PC-3 (cell line): ENCODE measurements at regions of chr17 and their contacts with region 1.

Region 1: GRCh38 chr17:68205251-68205807 is 42.5 kb upstream of the AMZ2 start:
- DNase-seq: peak; percentile 91
- ATAC-seq: peak; percentile 83
- H3K4me3 ChIP-seq: peak overlapping the region; percentile 94
- H3K27ac ChIP-seq: no peak overlapping the region
- H3K4me1 ChIP-seq: peaks cover 14% of the 10 kb centered on the region
- H3K27me3 ChIP-seq: peaks cover 2% of the 10 kb centered on the region
- CTCF ChIP-seq: peak; percentile 91

Region 2: GRCh38 chr17:68011199-68011665 is 194.1 kb before region 1 on chr17:
- CTCF ChIA-PET with region 1: no interaction called
- POLR2A ChIA-PET with region 1: no interaction called
- intact Hi-C with region 1: no loop called
- DNase-seq: peak; percentile 59
- ATAC-seq: peak; percentile 90
- H3K4me3 ChIP-seq: peak overlapping the region; percentile 48; the same call in 1 of the 2 replicates
- H3K27ac ChIP-seq: no peak overlapping the region
- H3K4me1 ChIP-seq: 0 out of 2 replicates have a peak, but pooled peaks cover 3% of the 10 kb centered on the region
- H3K27me3 ChIP-seq: no peaks in the 10 kb centered on the region
- CTCF ChIP-seq: peak; percentile 91

Region 3: DNA sequence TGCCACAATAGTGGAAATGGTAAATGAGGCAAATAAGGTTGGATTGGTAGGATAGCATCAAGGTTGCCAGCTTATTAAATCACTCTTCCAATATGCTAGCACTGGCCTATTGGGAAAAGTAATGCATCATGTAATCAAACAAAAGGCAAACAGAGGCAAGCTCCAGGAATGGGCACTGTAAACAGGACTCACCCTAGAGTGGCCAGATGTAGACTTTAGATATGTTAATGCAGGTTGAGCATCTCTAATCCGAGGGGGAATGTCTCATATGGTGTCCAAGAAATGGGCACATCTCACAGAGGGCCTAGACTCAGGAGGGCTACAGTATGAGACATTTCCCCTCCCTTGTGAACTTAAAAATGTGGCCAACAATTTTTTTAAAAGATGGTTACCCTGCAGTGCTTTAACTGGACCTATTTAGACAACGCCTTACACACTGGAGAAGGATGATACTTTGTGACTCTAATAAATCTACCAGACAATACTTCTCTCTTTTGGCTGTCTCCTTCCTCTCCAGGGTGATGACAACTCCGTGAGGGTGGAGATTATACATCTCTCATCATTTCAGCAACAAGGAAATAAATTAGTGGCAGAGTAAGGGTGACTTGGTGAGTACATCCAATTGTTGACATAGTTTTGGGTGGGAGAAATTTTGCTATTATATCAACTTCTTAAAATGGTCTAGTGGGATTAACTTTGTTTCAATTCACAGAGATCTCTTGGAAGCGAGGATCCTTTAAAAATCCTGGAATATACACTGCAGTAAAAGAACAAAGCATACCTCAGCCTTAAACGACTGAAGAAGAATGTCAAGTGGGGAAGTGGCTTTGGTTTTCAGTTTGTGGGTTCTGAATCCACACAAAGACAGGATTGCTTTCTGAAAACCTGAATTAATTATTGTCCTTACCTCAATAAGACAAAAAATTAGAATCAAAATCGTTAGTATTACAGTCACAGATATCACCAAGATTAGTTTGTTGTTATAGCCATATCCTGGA is 80.2 kb before region 1 on chr17:
- CTCF ChIA-PET with region 1: no interaction called
- POLR2A ChIA-PET with region 1: no interaction called
- intact Hi-C with region 1: no loop called
- DNase-seq: no peak
- ATAC-seq: no peak
- H3K4me3 ChIP-seq: no peak overlapping the region
- H3K27ac ChIP-seq: no peak overlapping the region
- H3K4me1 ChIP-seq: no peaks in the 10 kb centered on the region
- H3K27me3 ChIP-seq: no peaks in the 10 kb centered on the region
- CTCF ChIP-seq: no peak

Region 4: DNA sequence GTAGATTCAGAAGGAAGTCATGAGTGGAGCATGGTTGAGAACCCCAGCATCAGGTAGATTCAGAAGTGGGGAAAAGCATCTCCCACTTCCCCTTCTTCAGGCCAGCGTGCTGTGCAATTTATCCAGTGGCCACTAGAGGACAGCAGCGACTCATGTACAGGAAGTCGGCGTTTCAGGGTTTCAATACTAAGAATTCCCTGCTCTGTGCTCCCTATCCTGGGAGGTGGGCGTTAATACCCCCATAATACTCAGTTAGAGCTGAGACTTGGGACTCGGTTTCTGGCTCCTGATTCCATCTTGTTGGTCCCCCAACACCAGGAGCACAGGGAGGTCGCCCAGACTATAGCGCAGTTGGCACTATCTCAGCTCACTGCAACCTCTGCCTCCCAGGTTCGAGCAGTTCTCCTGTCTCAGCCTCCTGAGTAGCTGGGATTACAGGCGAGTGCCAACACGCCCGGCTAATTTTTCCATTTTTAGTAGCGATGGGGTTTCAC is 32.8 kb before region 1 on chr17:
- CTCF ChIA-PET with region 1: interaction called, 9 read pairs
- POLR2A ChIA-PET with region 1: no interaction called
- intact Hi-C with region 1: loop called (anchors 1 kb)
- DNase-seq: peak; percentile 90
- ATAC-seq: peak; percentile 83
- H3K4me3 ChIP-seq: 0 out of 2 replicates have a peak overlapping the region, but pooled peaks have one; percentile 5
- H3K27ac ChIP-seq: no peak overlapping the region
- H3K4me1 ChIP-seq: no peaks in the 10 kb centered on the region
- H3K27me3 ChIP-seq: no peaks in the 10 kb centered on the region
- CTCF ChIP-seq: peak; percentile 96

Region 5: GRCh38 chr17:68247445-68248198 is 42.3 kb after region 1 on chr17 and contains the start of gene AMZ2:
- CTCF ChIA-PET with region 1: no interaction called
- POLR2A ChIA-PET with region 1: no interaction called
- intact Hi-C with region 1: loop called (anchors 5 kb)
- DNase-seq: peak; percentile 97
- ATAC-seq: peak; percentile 98
- H3K4me3 ChIP-seq: peak within 1 kb of the TSS; percentile 89
- H3K27ac ChIP-seq: peak within 1 kb of the TSS; percentile 49
- H3K4me1 ChIP-seq: peaks cover 11% of the 10 kb centered on the region
- H3K27me3 ChIP-seq: no peaks in the 10 kb centered on the region
- CTCF ChIP-seq: no peak
- total RNA-seq, gene AMZ2: 81.1 and 88.5 TPM in 2 replicates